Breast epithelium (tissue), 4 donors: ENCODE measurements at regions of chr13 and their contacts with region 1.

Region 1: GRCh38 chr13:46613409-46614049 is 60.6 kb downstream of the LRCH1 start:
- DNase-seq: no peak
- H3K4me3 ChIP-seq: no peak overlapping the region
- H3K27ac ChIP-seq: no peak overlapping the region
- H3K4me1 ChIP-seq: no peaks in the 10 kb centered on the region
- H3K27me3 ChIP-seq: no peaks in the 10 kb centered on the region
- CTCF ChIP-seq: no peak
- POLR2A ChIP-seq: no peak

Region 2: DNA sequence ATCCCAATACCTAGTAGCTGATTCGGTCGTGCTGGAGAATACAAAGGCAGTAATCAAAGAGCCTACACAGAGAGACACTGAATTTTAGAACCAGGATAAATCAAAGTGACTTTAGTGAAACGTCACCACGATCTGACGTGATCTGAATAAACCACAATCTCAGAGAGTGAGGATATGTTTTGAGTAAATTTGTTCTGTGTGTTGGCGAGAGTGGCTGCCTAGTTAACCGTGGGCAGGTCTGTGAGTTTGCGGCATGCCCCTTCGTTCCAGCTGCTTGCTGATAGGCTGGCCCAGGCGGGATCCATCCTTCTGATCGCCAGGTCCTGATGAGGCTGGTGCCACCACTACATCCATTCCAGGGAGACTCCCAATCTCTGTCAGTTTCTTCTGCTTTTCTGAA is 20.1 kb before region 1 on chr13:
- intact Hi-C with region 1: loop called (anchors 1 kb)
- DNase-seq: no peak
- H3K4me3 ChIP-seq: no peak overlapping the region
- H3K27ac ChIP-seq: peak overlapping the region in 1 of 2 donors; percentile 86
- H3K4me1 ChIP-seq: peaks cover 3 to 12% of the 10 kb centered on the region in 2 donors
- H3K27me3 ChIP-seq: no peaks in the 10 kb centered on the region
- CTCF ChIP-seq: no peak
- POLR2A ChIP-seq: no peak